ENCODE measurements at regions of chr7 and their contacts with region 1.

Region 1: GRCh38 chr7:113421696-113422330 is 303.5 kb upstream of the SMIM30 start:
- DNase-seq: peak; percentile 88
- ATAC-seq: peak; percentile 99
- H3K4me3 Mint-ChIP-seq: no peak overlapping the region
- H3K27ac Mint-ChIP-seq: no peak overlapping the region
- H3K4me1 Mint-ChIP-seq: peaks cover 2% of the 10 kb centered on the region
- H3K27me3 Mint-ChIP-seq: peaks cover 2% of the 10 kb centered on the region

Region 2: GRCh38 chr7:111741811-111742240 is 1680.0 kb before region 1 on chr7:
- CTCF ChIA-PET with region 1: no interaction called
- POLR2A ChIA-PET with region 1: no interaction called
- intact Hi-C with region 1: loop called (anchors 5 to 10 kb)
- DNase-seq: peak; percentile 55
- ATAC-seq: peak; percentile 86
- H3K4me3 Mint-ChIP-seq: no peak overlapping the region
- H3K27ac Mint-ChIP-seq: no peak overlapping the region
- H3K4me1 Mint-ChIP-seq: no peaks in the 10 kb centered on the region
- H3K27me3 Mint-ChIP-seq: peaks cover 2% of the 10 kb centered on the region

Region 3: GRCh38 chr7:112869111-112869757 is 552.6 kb before region 1 on chr7:
- CTCF ChIA-PET with region 1: interaction called, 3 read pairs
- POLR2A ChIA-PET with region 1: no interaction called
- intact Hi-C with region 1: loop called in 1 of 2 experiments (anchors 10 kb)
- DNase-seq: peak; percentile 73
- ATAC-seq: peak; percentile 63
- H3K4me3 Mint-ChIP-seq: no peak overlapping the region
- H3K27ac Mint-ChIP-seq: no peak overlapping the region
- H3K4me1 Mint-ChIP-seq: peaks cover 19% of the 10 kb centered on the region
- H3K27me3 Mint-ChIP-seq: no peaks in the 10 kb centered on the region

Region 4: DNA sequence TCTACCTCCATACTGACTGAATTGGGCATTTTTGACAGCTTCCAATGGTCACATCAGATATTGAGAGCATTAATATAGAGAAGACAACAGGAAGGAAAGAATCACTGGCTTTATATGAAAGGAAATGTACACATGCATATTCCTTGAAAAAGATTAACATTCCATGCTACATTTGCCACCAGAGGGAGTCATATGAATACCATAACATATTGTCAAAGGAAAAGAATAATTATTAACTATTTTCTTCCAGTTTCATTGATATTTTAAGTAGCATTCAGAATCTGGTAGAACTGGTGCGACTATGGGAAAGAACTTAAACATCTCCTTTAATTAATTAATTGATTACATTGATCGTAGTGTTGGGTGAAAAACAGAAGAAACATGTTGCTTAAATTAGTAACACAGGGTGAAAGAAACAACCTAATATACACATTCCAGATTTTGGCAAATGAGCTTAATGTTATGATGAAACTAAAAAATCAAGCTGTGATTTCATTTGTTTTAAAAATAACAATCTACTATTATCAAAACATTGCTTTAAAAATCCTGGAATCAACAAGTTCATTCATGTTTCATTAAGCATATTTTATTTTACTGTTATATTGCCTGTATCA is 406.7 kb before region 1 on chr7:
- CTCF ChIA-PET with region 1: no interaction called
- POLR2A ChIA-PET with region 1: no interaction called
- intact Hi-C with region 1: loop called in 1 of 2 experiments (anchors 5 kb)
- DNase-seq: no peak
- ATAC-seq: no peak
- H3K4me3 Mint-ChIP-seq: no peak overlapping the region
- H3K27ac Mint-ChIP-seq: no peak overlapping the region
- H3K4me1 Mint-ChIP-seq: no peaks in the 10 kb centered on the region
- H3K27me3 Mint-ChIP-seq: no peaks in the 10 kb centered on the region

Region 5: GRCh38 chr7:113159746-113160339 is 262.0 kb before region 1 on chr7:
- CTCF ChIA-PET with region 1: interaction called, 7 read pairs
- POLR2A ChIA-PET with region 1: no interaction called
- intact Hi-C with region 1: loop called (anchors 1 kb)
- DNase-seq: peak; percentile 27
- ATAC-seq: no peak
- H3K4me3 Mint-ChIP-seq: no peak overlapping the region
- H3K27ac Mint-ChIP-seq: no peak overlapping the region
- H3K4me1 Mint-ChIP-seq: no peaks in the 10 kb centered on the region
- H3K27me3 Mint-ChIP-seq: peaks cover 9% of the 10 kb centered on the region

Region 6: DNA sequence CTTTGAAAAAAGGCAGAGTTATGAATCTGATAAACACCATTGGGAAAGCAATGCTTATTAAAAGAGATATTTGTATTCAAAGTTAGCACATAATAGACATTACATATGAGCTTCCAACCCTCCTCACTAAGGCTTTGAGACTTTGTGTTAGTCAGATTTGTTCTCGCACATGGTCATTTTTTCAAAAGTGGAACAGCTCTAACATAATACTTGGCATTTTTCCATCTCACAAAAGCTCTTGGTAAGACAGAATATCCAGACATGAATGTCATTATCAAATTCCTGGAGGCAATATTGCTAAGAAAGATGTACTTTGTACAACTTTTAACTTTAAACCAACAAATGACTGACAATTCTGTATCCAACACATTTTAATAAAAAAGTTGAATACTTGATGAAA is 11.0 kb before region 1 on chr7:
- CTCF ChIA-PET with region 1: interaction called, 10 read pairs
- POLR2A ChIA-PET with region 1: interaction called, 4 read pairs
- intact Hi-C with region 1: no loop called
- DNase-seq: no peak
- ATAC-seq: no peak
- H3K4me3 Mint-ChIP-seq: no peak overlapping the region
- H3K27ac Mint-ChIP-seq: no peak overlapping the region
- H3K4me1 Mint-ChIP-seq: no peaks in the 10 kb centered on the region
- H3K27me3 Mint-ChIP-seq: peaks cover 6% of the 10 kb centered on the region